ENCODE measurements at regions of chr1 and their contacts with region 1.

Region 1: DNA sequence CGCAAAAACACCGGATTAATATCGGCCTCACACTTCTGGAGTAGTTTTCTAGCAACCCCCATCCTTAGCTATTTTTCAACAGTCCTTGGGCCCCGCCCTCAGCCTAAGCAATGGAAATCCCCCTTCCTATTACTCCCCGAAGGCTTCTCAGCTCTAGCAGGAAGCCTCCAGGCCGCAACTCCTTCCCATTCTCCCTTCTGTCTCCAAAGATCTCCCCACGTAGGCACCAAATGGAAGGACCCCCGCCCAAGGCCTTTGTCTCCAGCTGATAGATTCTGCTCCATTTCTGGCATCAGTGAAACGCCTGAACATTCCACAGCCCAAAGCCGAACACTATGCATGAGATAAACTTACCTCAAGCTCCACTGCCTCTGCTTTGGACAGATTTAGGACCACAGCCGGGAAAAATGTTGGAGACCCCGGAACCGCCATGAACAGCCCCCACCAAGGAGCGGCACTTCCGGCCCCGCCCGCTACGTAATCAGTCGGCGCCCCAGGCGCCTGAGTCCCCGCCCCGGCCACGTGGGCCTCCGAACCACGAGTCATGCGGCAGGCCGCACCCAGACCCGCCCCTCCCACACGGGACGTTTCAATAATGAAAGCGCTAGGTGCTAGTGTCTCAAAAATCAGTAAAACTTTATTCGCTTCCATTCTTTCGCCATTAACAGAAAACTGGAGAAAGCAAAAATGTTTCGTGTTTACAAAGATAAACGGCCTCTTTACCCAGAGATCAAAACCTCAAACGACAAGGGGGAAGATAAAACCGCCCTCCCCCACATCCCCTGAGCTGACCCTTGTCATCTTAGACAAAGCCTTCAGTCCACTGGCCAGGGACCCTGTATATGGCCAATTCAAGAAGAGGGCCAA is at the start of gene NRAS:
- DNase-seq: peak; percentile 97
- H3K4me3 Mint-ChIP-seq: peak within 1 kb of the TSS; percentile 91
- H3K27ac Mint-ChIP-seq: peak within 1 kb of the TSS; percentile 97
- H3K4me1 Mint-ChIP-seq: peaks cover 31% of the 10 kb centered on the region
- H3K27me3 Mint-ChIP-seq: no peaks in the 10 kb centered on the region
- total RNA-seq, gene NRAS: 51.7 to 52.1 TPM

Region 2: DNA sequence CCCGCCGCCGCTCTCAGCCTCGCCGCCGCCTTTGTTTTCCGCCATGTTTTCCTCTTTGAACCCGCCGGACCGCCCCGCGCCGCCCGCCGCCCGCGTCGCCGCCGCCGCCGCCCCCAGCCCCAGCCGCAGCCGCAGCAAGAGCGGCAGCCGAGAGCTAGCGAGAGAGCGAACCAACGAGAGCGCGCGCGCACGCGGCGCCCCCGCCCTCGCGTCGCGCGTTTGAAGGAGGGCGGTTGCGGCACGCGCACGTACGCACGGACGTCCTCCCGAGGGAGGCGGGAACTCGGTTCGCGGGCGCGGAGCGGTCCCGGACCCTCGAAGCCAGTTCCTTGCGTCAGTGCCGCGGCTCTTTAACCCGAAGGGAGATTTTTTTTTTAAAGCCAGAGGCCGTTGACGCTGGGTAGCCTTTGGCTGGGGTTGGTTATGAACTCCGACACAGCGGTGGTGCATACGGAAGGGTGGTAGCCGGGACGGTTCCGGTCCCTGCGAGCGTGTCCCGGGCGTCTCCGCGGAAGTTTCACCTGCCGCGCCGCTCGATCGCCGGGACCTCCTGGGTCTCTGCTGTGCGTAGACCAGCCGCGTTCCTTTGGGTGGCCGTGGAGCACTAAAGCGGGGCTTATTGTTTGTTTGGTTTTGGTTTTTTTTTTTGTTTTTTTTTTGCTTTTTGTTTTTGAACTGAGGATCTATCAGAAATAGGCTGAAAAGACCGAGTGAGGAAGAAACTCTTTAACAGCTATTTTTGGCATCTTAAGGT is 205.3 kb before region 1 on chr1 and contains the start of gene TRIM33:
- CTCF ChIA-PET with region 1: no interaction called
- POLR2A ChIA-PET with region 1: interaction called, 6 read pairs
- intact Hi-C with region 1: loop called (anchors 1 kb)
- DNase-seq: peak; percentile 95
- H3K4me3 Mint-ChIP-seq: peak within 1 kb of the TSS; percentile 91
- H3K27ac Mint-ChIP-seq: peak within 1 kb of the TSS; percentile 98
- H3K4me1 Mint-ChIP-seq: peaks cover 41% of the 10 kb centered on the region
- H3K27me3 Mint-ChIP-seq: no peaks in the 10 kb centered on the region
- total RNA-seq, gene TRIM33: 26.9 to 27.9 TPM

Region 3: DNA sequence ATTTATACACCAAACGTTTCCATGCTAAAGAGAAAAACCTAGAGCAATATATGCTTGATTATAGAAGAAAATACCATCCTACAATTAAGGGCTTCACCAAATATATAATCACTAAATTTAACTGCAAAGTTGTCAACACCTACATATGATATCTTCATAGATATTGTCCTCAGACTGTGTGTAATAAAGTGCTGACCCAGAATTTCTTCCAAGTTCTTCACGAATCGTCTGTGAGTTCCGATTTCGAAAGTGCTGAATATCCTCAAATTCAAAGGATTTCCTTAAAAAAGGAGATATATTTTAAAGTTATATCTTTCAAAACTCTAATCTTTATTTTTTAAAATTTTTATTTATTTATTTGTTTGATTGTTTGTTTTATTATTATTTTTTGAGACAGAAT is 93.2 kb before region 1 on chr1:
- CTCF ChIA-PET with region 1: no interaction called
- POLR2A ChIA-PET with region 1: no interaction called
- intact Hi-C with region 1: no loop called
- DNase-seq: no peak
- H3K4me3 Mint-ChIP-seq: no peak overlapping the region
- H3K27ac Mint-ChIP-seq: no peak overlapping the region
- H3K4me1 Mint-ChIP-seq: no peaks in the 10 kb centered on the region
- H3K27me3 Mint-ChIP-seq: peaks cover 6% of the 10 kb centered on the region

Region 4: DNA sequence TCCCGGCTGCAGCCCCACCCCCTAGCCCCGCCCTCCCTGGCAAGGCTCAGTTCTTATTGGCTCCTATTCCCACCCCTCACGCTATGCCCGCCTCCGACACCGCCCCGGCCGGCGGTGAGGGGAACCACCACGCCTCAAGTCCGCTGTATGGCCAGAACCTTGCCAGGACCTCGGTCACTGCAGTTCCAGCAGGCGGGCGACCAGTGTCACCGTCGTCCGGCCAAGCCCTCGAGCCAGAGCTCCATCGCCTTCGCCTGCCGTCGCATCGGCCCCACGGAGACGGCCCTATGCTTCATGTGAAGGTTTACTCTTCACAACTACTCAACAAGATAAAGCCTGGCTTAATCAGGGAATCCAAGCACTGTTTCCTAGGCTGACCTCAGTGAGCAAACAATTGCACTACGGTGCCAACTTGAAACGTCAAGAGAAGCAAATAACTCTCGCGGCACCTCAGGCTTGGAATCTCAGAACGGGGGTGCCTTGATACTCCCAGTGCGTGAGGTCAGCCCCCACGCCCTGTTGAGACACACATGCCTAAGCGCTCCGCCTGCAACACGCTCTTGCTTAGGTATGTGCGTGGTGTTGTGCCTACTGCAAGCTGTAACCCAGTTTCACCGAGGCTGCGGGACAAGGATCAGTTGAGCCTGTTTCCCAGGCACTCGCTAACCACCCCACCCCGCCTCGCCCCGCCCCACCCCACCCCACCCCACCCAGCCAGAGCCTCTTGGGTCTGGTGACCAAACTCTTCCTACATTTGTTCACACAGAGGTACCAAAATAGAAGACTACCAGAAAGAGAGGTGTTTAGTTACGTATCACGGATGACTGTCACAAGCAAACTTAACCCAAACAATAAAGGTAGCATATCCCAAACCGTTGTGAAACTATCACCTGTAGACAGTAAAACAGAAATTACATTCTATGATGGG is 46.2 kb before region 1 on chr1:
- CTCF ChIA-PET with region 1: interaction called, 3 read pairs
- POLR2A ChIA-PET with region 1: interaction called, 5 read pairs
- intact Hi-C with region 1: loop called (anchors 1 kb)
- DNase-seq: peak; percentile 92
- H3K4me3 Mint-ChIP-seq: peak overlapping the region; percentile 88
- H3K27ac Mint-ChIP-seq: no peak overlapping the region
- H3K4me1 Mint-ChIP-seq: peaks cover 7% of the 10 kb centered on the region
- H3K27me3 Mint-ChIP-seq: peaks cover 2% of the 10 kb centered on the region

Region 5: DNA sequence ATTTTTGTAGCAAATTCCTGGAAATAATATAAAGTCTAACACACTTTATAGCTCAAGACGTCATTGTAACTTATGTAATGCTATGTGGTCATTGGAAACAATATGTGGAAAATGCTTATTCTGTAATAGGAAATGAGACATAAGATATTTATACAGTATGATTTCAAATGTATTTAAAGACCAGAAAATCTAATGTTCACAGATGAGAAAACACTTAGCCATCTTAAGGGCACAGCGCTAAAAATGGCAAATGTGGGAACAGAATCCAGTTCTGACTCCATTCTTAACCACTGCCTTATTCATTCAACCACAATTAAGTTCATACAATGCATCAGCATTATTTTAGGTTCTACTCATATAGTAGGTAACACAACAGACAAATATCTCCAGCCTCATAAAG is 28.8 kb after region 1 on chr1:
- CTCF ChIA-PET with region 1: interaction called, 5 read pairs
- POLR2A ChIA-PET with region 1: interaction called, 4 read pairs
- intact Hi-C with region 1: loop called (anchors 2 kb)
- DNase-seq: peak; percentile 24
- H3K4me3 Mint-ChIP-seq: no peak overlapping the region
- H3K27ac Mint-ChIP-seq: peak overlapping the region; percentile 64
- H3K4me1 Mint-ChIP-seq: peaks cover 79% of the 10 kb centered on the region
- H3K27me3 Mint-ChIP-seq: no peaks in the 10 kb centered on the region

Region 6: DNA sequence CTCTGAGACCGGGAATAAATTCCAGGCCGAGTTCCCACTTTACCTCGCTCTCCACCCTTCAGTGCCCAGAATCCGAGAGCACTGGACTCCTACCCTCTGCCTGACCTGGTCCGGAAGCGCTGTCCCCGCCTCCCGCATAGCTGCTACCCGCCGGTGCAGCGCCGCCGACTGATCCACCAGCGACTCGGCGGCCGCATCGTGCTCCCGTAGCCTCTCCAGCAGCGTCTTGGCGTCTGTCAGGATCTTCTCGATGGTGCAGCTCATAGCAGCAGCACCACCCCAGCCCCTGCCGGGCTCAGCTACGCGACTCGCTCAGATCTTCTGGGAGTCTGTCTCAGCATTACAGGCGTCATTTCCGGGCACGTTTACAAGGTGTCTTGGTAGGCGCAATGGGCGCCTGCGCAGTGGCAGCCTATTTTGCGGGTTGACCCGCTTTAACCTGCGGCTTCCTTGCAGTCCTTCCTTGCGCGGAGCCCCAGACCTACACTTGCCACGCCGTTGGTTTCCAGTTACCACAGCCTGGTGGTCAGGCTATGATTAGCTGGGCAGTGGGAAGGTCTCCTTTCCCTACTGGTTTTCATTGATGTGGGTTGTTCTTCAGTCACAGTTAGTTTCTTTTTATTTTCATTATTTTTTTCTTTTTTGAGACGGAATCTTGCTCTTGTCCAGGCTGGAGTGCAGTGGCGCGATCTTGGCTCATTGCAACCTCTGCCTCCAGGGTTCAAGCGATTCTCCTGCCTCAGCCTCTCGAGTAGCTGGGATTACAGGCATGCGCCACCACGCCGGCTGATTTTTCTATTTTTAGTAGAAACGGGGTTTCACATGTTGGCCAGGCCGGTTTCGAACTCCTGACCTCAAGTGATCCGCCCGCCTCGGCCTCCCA is 64.0 kb after region 1 on chr1 and contains the start of gene SIKE1:
- CTCF ChIA-PET with region 1: interaction called, 4 read pairs
- POLR2A ChIA-PET with region 1: interaction called, 8 read pairs
- intact Hi-C with region 1: loop called (anchors 1 kb)
- DNase-seq: peak; percentile 97
- H3K4me3 Mint-ChIP-seq: peak within 1 kb of the TSS; percentile 100
- H3K27ac Mint-ChIP-seq: peak within 1 kb of the TSS; percentile 100
- H3K4me1 Mint-ChIP-seq: peaks cover 23% of the 10 kb centered on the region
- H3K27me3 Mint-ChIP-seq: no peaks in the 10 kb centered on the region
- total RNA-seq, gene SIKE1: 60.4 to 66.7 TPM

Region 7: GRCh38 chr1:114794038-114794437 is 77.5 kb after region 1 on chr1:
- CTCF ChIA-PET with region 1: no interaction called
- POLR2A ChIA-PET with region 1: no interaction called
- intact Hi-C with region 1: no loop called
- DNase-seq: no peak
- H3K4me3 Mint-ChIP-seq: no peak overlapping the region
- H3K27ac Mint-ChIP-seq: no peak overlapping the region
- H3K4me1 Mint-ChIP-seq: no peaks in the 10 kb centered on the region
- H3K27me3 Mint-ChIP-seq: peaks cover 12% of the 10 kb centered on the region

Region 8: DNA sequence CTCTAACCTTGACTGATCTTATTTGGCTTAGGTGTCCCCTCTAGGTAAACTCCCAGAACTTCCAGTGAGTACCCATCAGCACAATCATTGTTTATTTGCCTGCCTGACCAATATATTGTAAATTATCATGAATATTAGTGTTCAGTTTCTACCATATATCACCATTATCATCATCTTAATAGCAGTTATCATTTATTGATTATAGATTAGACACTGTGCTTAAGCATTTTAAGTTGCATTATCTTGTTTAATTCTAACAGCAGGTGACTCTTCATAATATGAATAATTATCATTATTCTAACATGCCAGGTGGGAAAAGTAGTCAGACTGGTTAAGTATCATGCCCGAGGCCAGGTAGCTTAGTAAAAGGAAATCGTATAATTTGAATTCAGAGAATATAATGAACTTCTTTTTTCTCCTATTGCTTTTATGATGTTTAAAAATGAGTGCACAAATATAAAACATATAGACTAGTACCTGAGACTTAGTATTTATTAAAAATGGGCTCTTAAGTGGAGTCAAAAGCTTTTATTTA is 168.0 kb after region 1 on chr1:
- CTCF ChIA-PET with region 1: no interaction called
- POLR2A ChIA-PET with region 1: no interaction called
- intact Hi-C with region 1: no loop called
- DNase-seq: no peak
- H3K4me3 Mint-ChIP-seq: no peak overlapping the region
- H3K27ac Mint-ChIP-seq: no peak overlapping the region
- H3K4me1 Mint-ChIP-seq: no peaks in the 10 kb centered on the region
- H3K27me3 Mint-ChIP-seq: peaks cover 12% of the 10 kb centered on the region

Measured in activated CD4-positive, alpha-beta memory T cell treated with anti-CD3 and anti-CD28 coated beads for 36 hours (primary cell).